PC-9 (cell line): ENCODE measurements at regions of chr12 and their contacts with region 1.

Region 1: DNA sequence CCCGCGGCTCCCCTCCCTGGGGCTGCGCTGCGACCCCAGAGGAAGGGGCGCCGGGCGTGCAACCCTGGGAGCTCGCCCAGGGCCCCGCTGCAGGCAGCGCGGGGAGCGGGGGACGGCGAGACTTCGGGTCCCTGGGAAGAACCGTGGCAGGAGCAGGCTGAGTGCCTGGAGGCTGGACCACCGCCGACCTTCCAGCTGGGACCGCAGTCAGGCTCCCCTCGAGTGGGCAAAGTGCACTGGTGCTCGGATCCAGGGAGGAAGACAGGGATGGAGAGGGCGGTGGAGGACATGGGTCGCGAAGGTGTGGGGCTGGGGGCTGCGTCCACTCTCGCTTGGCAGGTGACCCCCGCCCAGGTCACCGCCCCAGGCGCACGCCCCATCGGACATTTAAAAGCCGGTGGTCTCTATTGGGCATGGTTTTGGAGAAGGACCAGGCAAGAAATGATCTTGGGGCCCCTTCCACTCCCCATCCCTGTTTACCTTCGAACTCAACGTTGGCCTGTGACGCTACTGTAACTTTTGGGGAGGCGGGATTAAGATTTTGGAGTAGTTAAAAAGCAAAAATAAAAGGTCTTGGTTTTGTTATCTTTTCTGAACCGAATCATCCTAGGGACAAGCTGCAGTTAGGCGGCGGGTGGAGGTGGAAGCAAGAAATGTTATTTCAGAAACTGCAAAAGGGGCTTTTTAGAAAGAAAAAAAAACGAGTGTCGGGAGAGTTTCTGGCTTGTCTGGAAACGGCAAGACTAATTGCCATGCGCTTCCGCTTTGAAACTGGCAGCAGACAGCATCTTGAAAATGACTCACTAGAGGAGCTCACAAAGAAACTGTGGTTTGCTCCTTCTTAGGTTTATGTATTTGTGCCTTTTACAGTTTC is 1.0 kb downstream of the ELK3 start:
- DNase-seq: peak; percentile 55 to 83
- H3K4me3 ChIP-seq: peak overlapping the region; percentile 100
- H3K27ac ChIP-seq: peak overlapping the region; percentile 99
- H3K4me1 ChIP-seq: peaks cover 28% of the 10 kb centered on the region
- H3K27me3 ChIP-seq: no peaks in the 10 kb centered on the region
- CTCF ChIP-seq: no peak

Region 2: GRCh38 chr12:95858479-95859343 is 336.5 kb before region 1 on chr12 and contains the start of gene SNRPF:
- CTCF ChIA-PET with region 1: no interaction called
- POLR2A ChIA-PET with region 1: no interaction called
- intact Hi-C with region 1: loop called (anchors 1 kb)
- DNase-seq: peak; percentile 93 to 96
- H3K4me3 ChIP-seq: peak within 1 kb of the TSS; percentile 94
- H3K27ac ChIP-seq: peak within 1 kb of the TSS; percentile 77
- H3K4me1 ChIP-seq: peaks cover 16% of the 10 kb centered on the region
- H3K27me3 ChIP-seq: no peaks in the 10 kb centered on the region
- CTCF ChIP-seq: no peak
- total RNA-seq, gene SNRPF: 31.1 and 50.3 TPM in 2 replicates

Region 3: GRCh38 chr12:96073346-96074330 is 121.6 kb before region 1 on chr12:
- CTCF ChIA-PET with region 1: no interaction called
- POLR2A ChIA-PET with region 1: interaction called, 6 read pairs
- intact Hi-C with region 1: loop called (anchors 1 kb)
- DNase-seq: peak; percentile 86 to 100
- H3K4me3 ChIP-seq: peak overlapping the region; percentile 19; the same call in 1 of the 2 replicates
- H3K27ac ChIP-seq: peak overlapping the region; percentile 95
- H3K4me1 ChIP-seq: peaks cover 62% of the 10 kb centered on the region
- H3K27me3 ChIP-seq: no peaks in the 10 kb centered on the region
- CTCF ChIP-seq: 0 out of 2 replicates have a peak, but pooled peaks have one; percentile 5

Region 4: GRCh38 chr12:96237465-96238077 is 42.4 kb after region 1 on chr12:
- CTCF ChIA-PET with region 1: no interaction called
- POLR2A ChIA-PET with region 1: interaction called, 14 read pairs
- intact Hi-C with region 1: no loop called
- DNase-seq: peak in 1 of 2 experiments; percentile 33
- H3K4me3 ChIP-seq: no peak overlapping the region
- H3K27ac ChIP-seq: no peak overlapping the region
- H3K4me1 ChIP-seq: no peaks in the 10 kb centered on the region
- H3K27me3 ChIP-seq: no peaks in the 10 kb centered on the region
- CTCF ChIP-seq: no peak